ENCODE measurements at regions of chr22 and their contacts with region 1.

Region 1: DNA sequence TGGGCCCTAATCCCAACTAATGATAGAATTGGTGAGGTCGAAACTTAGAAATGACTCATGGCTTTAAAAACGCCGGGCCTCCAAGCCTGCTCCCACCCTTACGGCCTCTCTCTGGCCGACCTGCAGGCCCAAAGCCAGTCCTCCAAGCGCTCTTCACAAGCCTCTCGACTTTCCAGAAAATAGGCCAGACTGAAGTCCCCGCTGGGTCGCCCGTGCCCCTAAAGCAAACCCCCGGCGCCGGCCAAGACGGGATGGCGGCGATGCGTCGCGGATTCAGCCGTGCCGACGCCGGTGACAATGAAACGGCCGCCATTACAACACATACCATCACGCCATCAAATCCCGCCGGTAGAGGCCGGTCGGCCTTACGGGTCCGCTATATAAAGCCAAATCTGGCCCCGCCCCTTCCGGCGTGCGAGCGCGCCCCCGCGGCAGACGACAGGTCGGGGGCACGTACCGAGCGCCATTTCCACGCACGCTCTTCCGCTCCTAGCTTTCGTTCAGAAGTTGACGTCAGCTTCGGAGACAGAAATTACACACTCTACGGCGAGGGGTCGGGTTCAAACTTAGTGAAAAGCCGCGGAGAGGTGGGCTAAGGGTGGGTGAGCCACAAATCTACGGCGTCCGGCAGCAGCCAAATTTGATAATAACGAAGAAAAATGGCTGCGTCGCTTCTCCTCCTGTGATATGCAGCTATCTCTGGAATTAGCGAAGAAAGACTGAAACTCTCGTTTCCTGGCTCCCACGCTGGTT is at the start of gene RPL3:
- DNase-seq: peak; percentile 99
- ATAC-seq: peak; percentile 93
- total RNA-seq, gene RPL3: 355 TPM

Region 2: GRCh38 chr22:39090426-39091064 is 228.9 kb before region 1 on chr22:
- intact Hi-C with region 1: no loop called
- DNase-seq: no peak
- ATAC-seq: no peak

Region 3: GRCh38 chr22:39152511-39153219 is 166.8 kb before region 1 on chr22 and contains the start of gene CBX7:
- intact Hi-C with region 1: loop called (anchors 2 kb)
- DNase-seq: peak; percentile 98
- ATAC-seq: peak; percentile 92
- total RNA-seq, gene CBX7: 66.0 TPM

Region 4: GRCh38 chr22:39240828-39241793 is 78.3 kb before region 1 on chr22:
- intact Hi-C with region 1: no loop called
- DNase-seq: no peak
- ATAC-seq: no peak

Region 5: DNA sequence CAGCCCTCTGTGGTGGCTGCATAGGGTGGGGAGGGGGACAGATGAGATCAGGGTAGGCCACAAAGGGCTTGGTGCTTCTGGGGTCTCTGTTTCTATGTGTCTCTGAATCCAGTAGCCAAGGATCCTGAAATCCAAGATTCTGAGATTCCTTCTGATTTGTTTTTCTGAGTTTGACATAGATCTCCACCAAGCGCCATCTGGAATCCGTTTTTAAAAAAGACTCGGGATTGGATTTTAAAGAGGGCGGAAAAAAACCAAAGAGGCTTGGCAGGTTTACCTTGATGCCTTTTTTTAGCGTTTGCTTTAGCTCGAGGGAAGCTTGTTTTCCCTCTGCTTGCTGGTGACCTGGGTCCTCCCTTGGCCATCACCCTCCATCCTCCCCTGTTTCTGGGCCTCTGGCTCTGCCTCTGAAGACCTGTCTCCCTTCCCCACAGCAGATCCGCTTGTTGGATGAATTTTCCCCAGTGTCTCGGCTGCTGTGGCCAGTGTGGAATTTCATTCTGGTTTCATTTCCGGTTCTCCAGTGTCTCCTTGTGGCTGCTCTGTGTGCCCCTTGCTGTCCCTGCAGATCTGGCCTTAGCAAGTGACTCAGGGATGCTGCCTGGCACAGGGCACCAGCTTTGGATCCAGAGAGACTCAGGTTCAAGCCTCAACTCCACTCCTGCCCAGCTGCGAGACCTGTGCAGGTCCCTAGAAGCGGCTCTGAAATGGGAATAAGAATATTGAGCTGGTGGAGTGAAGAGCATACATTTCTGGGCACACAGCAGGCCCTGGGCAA is 45.5 kb after region 1 on chr22:
- intact Hi-C with region 1: no loop called
- DNase-seq: no peak
- ATAC-seq: no peak